ENCODE measurements at regions of chr1 and their contacts with region 1.

Region 1: GRCh38 chr1:40691538-40692428 is at the start of gene NFYC:
- DNase-seq: peak; percentile 88 to 99 (median 92)
- ATAC-seq: peak; percentile 83
- H3K4me3 ChIP-seq: peak within 1 kb of the TSS; percentile 96
- H3K4me3 Mint-ChIP-seq: peak within 1 kb of the TSS; percentile 91
- H3K27ac ChIP-seq: peak within 1 kb of the TSS; percentile 98 to 100
- H3K27ac Mint-ChIP-seq: peak within 1 kb of the TSS; percentile 92
- H3K4me1 ChIP-seq: peaks cover 33% of the 10 kb centered on the region
- H3K4me1 Mint-ChIP-seq: peaks cover 73% of the 10 kb centered on the region
- H3K27me3 ChIP-seq: no peaks in the 10 kb centered on the region
- H3K27me3 Mint-ChIP-seq: no peaks in the 10 kb centered on the region
- CTCF ChIP-seq: no peak
- total RNA-seq, gene NFYC: 28.6 to 35.2 TPM

Region 2: GRCh38 chr1:40373338-40374283 is 318.2 kb before region 1 on chr1 and contains the start of gene SMAP2:
- CTCF ChIA-PET with region 1: no interaction called
- POLR2A ChIA-PET with region 1: interaction called, 11 read pairs
- intact Hi-C with region 1: loop called in 1 of 2 experiments (anchors 10 kb)
- DNase-seq: peak; percentile 89 to 98 (median 95)
- ATAC-seq: peak; percentile 78
- H3K4me3 ChIP-seq: peak within 1 kb of the TSS; percentile 89
- H3K4me3 Mint-ChIP-seq: peak within 1 kb of the TSS; percentile 100
- H3K27ac ChIP-seq: peak within 1 kb of the TSS; percentile 93 to 99
- H3K27ac Mint-ChIP-seq: peak within 1 kb of the TSS; percentile 99
- H3K4me1 ChIP-seq: peaks cover 36% of the 10 kb centered on the region
- H3K4me1 Mint-ChIP-seq: peaks cover 58% of the 10 kb centered on the region
- H3K27me3 ChIP-seq: no peaks in the 10 kb centered on the region
- H3K27me3 Mint-ChIP-seq: peaks cover 7% of the 10 kb centered on the region
- CTCF ChIP-seq: no peak
- total RNA-seq, gene SMAP2: 214 to 216 TPM

Region 3: GRCh38 chr1:40423264-40423642 is 268.5 kb before region 1 on chr1:
- CTCF ChIA-PET with region 1: no interaction called
- POLR2A ChIA-PET with region 1: no interaction called
- intact Hi-C with region 1: no loop called
- DNase-seq: no peak
- ATAC-seq: no peak
- H3K4me3 ChIP-seq: no peak overlapping the region
- H3K4me3 Mint-ChIP-seq: no peak overlapping the region
- H3K27ac ChIP-seq: no peak overlapping the region
- H3K27ac Mint-ChIP-seq: peak overlapping the region; percentile 64
- H3K4me1 ChIP-seq: no peaks in the 10 kb centered on the region
- H3K4me1 Mint-ChIP-seq: peaks cover 12% of the 10 kb centered on the region
- H3K27me3 ChIP-seq: no peaks in the 10 kb centered on the region
- H3K27me3 Mint-ChIP-seq: no peaks in the 10 kb centered on the region
- CTCF ChIP-seq: no peak

Region 4: DNA sequence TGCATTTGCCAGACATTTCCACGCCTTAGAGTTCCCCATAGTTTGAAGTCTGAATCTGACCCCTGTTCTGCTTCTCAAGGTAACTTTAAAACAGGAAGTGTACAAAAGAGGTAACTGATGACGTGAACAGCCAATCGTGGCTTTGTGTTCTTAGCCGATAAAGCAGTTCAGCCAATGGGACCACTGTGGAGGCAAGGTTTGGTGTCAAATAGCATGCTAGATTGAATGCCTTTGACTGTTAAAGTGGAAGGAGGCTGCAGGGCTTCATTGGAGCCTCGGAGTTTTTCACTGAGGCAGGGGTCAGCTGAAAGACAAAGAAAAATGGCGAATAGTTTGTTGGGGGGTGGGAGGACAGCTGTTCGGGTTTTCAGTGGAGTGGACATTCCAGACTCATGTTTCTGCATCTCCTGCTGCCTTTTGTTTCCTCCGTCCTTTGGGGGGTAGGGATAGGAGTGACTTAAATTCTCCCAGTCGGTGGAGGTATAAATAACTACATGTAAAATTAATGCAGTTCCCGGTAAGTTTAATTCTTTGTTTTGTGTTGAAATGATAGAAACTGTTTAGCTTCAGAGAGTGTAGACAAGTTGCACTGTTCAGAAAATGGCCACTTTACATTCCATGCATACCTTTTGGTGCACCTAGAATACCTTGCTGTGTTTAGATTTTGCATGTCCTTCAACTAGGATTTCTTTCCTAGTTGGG is 17.5 kb after region 1 on chr1:
- CTCF ChIA-PET with region 1: interaction called, 9 read pairs
- POLR2A ChIA-PET with region 1: interaction called, 174 read pairs
- intact Hi-C with region 1: loop called (anchors 1 kb)
- DNase-seq: peak; percentile 48 to 92 (median 62)
- ATAC-seq: peak; percentile 97
- H3K4me3 ChIP-seq: peak overlapping the region; percentile 57
- H3K4me3 Mint-ChIP-seq: peak overlapping the region; percentile 93
- H3K27ac ChIP-seq: peak overlapping the region; percentile 56 to 66
- H3K27ac Mint-ChIP-seq: peak overlapping the region; percentile 87
- H3K4me1 ChIP-seq: peaks cover 35% of the 10 kb centered on the region
- H3K4me1 Mint-ChIP-seq: peaks cover 76% of the 10 kb centered on the region
- H3K27me3 ChIP-seq: no peaks in the 10 kb centered on the region
- H3K27me3 Mint-ChIP-seq: no peaks in the 10 kb centered on the region
- CTCF ChIP-seq: no peak

Region 5: GRCh38 chr1:40732756-40733301 is 41.0 kb after region 1 on chr1:
- CTCF ChIA-PET with region 1: no interaction called
- POLR2A ChIA-PET with region 1: interaction called, 11 read pairs
- intact Hi-C with region 1: no loop called
- DNase-seq: no peak
- ATAC-seq: no peak
- H3K4me3 ChIP-seq: no peak overlapping the region
- H3K4me3 Mint-ChIP-seq: no peak overlapping the region
- H3K27ac ChIP-seq: no peak overlapping the region
- H3K27ac Mint-ChIP-seq: no peak overlapping the region
- H3K4me1 ChIP-seq: peaks cover 5% of the 10 kb centered on the region
- H3K4me1 Mint-ChIP-seq: peaks cover 55% of the 10 kb centered on the region
- H3K27me3 ChIP-seq: no peaks in the 10 kb centered on the region
- H3K27me3 Mint-ChIP-seq: no peaks in the 10 kb centered on the region
- CTCF ChIP-seq: no peak

Region 6: DNA sequence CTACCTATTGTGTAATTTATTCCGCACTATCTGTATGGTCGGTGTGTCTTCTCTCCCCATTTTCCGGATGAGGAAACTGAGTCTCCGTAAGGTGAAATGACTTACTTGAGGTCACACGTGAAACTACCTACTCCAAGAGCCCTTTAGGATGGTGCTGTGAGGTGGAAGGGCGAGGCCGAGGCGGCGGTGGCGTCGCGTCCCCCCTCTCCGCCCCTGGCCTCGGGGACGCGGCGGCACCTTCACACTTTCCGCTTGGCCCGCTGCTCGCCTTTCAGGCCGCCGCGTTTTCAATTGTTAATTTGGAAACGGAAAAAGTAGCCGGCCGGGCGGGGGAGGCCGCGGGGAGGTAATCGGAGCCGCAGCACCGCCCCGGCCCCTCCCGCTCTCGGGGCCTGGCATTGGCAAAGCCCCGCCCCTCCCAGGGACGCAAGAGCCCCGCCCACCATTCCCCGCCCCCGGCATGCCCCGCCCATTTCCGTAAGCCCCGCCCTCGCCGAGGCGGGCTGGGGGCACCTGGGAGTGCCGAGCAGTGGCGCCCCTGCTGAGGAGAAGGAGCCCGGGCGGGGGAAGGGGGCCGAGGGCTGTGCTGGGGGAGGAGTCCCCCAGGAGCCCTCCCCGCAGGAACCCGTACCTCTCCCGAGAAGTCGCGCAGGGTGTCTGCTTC is 110.4 kb after region 1 on chr1:
- CTCF ChIA-PET with region 1: interaction called, 3 read pairs
- POLR2A ChIA-PET with region 1: interaction called, 5 read pairs
- intact Hi-C with region 1: loop called in 1 of 2 experiments (anchors 5 kb)
- DNase-seq: peak; percentile 74 to 95 (median 85)
- ATAC-seq: peak; percentile 91
- H3K4me3 ChIP-seq: peak overlapping the region; percentile 53
- H3K4me3 Mint-ChIP-seq: peak overlapping the region; percentile 84
- H3K27ac ChIP-seq: peak overlapping the region; percentile 49 to 55
- H3K27ac Mint-ChIP-seq: peak overlapping the region; percentile 81
- H3K4me1 ChIP-seq: peaks cover 30% of the 10 kb centered on the region
- H3K4me1 Mint-ChIP-seq: peaks cover 32% of the 10 kb centered on the region
- H3K27me3 ChIP-seq: no peaks in the 10 kb centered on the region
- H3K27me3 Mint-ChIP-seq: no peaks in the 10 kb centered on the region
- CTCF ChIP-seq: no peak

Region 7: DNA sequence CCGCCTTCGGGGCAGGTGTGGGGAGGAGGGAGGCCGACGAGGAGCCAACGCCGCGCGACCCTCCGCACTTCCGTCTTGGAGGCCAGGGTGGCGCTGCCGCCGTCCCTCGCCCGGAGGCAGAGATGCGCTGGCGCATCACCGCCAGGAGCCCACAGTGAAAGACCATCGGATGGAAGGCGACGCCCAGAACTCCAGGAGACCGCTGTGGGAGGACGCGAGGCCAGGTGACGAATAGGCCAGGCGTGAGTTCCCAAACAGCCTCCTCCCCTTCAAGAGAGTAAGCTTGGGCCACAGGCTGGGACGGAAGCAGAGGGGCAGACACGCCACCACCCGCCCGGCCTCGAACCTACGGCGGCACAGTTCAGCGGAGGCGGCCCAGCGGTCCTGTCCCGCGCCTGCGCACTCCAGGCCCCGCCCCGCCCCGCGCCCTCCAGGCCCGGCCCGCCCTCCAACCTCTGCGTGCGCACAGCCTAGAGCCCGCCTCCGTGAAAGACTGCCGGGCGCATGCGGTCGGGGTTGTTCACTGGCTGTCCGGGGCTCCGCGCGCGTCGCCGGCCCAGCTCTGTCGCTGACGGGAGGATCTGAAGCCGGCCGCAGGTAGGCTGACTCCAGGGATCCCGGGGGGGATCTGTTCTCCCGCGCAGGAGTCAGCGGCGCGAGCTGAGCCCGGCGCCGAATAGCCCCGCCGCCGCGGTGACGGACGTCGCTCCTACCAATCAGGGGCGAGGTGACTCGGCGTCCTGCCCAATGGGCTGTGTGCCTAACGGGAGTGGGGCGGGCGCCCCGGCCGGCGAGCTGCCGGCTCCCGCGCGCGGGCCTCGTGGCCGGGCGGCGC is 287.7 kb after region 1 on chr1 and contains the start of gene CTPS1:
- CTCF ChIA-PET with region 1: no interaction called
- POLR2A ChIA-PET with region 1: interaction called, 9 read pairs
- intact Hi-C with region 1: loop called in 1 of 2 experiments (anchors 10 kb)
- DNase-seq: peak; percentile 92 to 98 (median 96)
- ATAC-seq: peak; percentile 86
- H3K4me3 ChIP-seq: peak within 1 kb of the TSS; percentile 82
- H3K4me3 Mint-ChIP-seq: peak within 1 kb of the TSS; percentile 90
- H3K27ac ChIP-seq: peak within 1 kb of the TSS; percentile 81 to 89
- H3K27ac Mint-ChIP-seq: peak within 1 kb of the TSS; percentile 89
- H3K4me1 ChIP-seq: peaks cover 25% of the 10 kb centered on the region
- H3K4me1 Mint-ChIP-seq: peaks cover 14% of the 10 kb centered on the region
- H3K27me3 ChIP-seq: no peaks in the 10 kb centered on the region
- H3K27me3 Mint-ChIP-seq: no peaks in the 10 kb centered on the region
- CTCF ChIP-seq: peak; percentile 12
- total RNA-seq, gene CTPS1: 37.1 to 37.4 TPM

Measured in CD4-positive, alpha-beta T cell (primary cell).